HCT116 (cell line): ENCODE measurements at regions of chr18 and their contacts with region 1.

Region 1: DNA sequence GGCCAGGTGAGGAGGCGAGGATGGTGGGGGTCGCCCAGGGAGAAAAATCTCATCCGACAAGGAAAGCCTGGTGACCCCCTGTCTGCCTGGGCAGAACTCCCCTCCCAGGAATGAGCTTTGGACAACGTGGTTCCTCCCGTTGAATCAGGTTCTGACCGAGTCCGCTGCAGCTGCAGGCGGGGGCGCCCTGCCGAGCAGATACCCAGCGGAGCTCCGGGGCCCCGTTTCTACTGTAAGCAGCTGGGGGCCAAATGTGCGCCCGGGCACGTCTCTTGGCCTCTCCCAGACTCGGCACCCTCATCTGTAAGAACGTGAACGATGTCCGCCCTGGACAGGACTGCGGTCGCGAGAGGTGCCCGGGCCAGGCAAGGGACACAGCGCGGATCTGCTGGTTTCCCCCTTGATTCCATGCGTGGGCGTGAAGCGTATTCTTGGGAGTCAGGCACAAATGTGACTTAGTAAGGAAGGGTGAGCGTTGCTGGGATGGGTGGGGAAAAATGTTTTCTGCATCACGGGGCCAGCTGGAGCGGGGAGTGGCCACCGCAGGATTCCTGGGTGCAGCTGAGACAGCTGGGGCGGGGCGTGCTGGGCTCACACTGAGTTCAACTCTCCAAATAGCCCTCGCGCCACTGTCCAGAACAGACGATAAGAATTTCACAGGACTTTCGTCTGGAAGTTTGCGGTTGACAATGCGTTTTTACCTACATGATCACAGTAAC is 20.2 kb upstream of the TUBB6 start:
- DNase-seq: peak; percentile 54
- ATAC-seq: peak; percentile 76
- H3K4me3 ChIP-seq: peak overlapping the region; percentile 45 to 70
- H3K27ac ChIP-seq: peak overlapping the region; percentile 44
- H3K4me1 ChIP-seq: peaks cover 22 to 35% of the 10 kb centered on the region in 2 experiments
- H3K27me3 ChIP-seq: no peaks in the 10 kb centered on the region
- CTCF ChIP-seq: no peak
- POLR2A ChIP-seq: no peak
- RAD21 ChIP-seq: no peak

Region 2: DNA sequence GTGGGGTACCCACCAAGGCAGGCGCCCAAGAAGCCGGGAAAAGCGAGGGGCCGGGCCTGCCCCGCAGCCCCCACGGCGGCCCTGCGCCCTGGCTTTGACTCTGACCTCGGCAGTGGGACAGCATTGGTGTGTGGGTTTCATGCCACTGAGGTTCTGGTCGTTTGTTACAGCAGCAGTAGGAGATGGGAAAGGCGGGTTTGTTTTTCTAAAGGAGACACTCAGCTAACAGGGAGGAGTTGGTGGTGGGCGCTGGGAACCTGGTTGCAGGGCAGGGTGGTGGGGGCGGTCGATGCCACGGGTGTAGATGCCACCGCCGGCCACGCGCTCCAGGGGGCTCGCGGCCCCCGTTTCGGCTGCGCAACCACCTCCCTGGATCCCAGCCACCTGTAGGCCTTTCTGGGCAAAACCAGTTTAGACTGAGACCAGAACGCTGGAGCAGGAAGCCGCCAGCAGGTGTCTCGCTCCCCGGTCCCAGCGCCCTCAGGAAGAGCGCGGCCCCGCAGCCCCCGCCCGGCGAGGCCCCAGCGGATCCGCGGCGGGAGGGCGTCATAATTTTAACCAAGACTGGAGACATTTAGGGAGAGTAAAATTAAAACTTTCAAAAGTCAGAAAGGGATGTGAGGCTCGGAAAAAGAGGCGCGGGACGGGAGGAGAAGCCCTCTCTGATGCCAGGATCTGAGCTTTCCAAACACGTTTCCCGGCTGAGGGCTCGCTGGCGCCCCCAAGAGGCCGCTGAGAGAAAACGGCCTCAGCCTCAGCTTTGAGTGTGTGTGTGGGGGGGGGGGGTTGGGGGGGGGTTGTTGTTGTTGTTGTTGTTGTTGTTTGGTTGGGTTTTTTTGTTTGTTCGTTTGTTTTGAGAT is 16.2 kb before region 1 on chr18:
- CTCF ChIA-PET with region 1: interaction called, 32 read pairs
- POLR2A ChIA-PET with region 1: interaction called, 11 read pairs
- RAD21 ChIA-PET with region 1: no interaction called
- intact Hi-C with region 1: no loop called
- DNase-seq: peak; percentile 49
- ATAC-seq: peak; percentile 94
- H3K4me3 ChIP-seq: peak overlapping the region; percentile 4 to 45; a peak in 3 of 4 replicates
- H3K27ac ChIP-seq: peak overlapping the region; percentile 43; the same call in 1 of the 2 replicates
- H3K4me1 ChIP-seq: peaks cover 0 to 7% of the 10 kb centered on the region in 2 experiments; a peak in 2 of 4 replicates
- H3K27me3 ChIP-seq: no peaks in the 10 kb centered on the region
- CTCF ChIP-seq: peak; percentile 59 to 92 (median 71); a peak in 5 of 6 replicates
- POLR2A ChIP-seq: no peak
- RAD21 ChIP-seq: no peak

Region 3: GRCh38 chr18:12327510-12328178 is 39.8 kb after region 1 on chr18:
- CTCF ChIA-PET with region 1: interaction called, 10 read pairs
- POLR2A ChIA-PET with region 1: no interaction called
- RAD21 ChIA-PET with region 1: no interaction called
- intact Hi-C with region 1: no loop called
- DNase-seq: peak; percentile 52
- ATAC-seq: peak; percentile 97
- H3K4me3 ChIP-seq: no peak overlapping the region
- H3K27ac ChIP-seq: no peak overlapping the region
- H3K4me1 ChIP-seq: peaks cover 0 to 7% of the 10 kb centered on the region in 2 experiments; a peak in 1 of 4 replicates
- H3K27me3 ChIP-seq: no peaks in the 10 kb centered on the region
- CTCF ChIP-seq: peak; percentile 62 to 98 (median 97); a peak in 5 of 6 replicates
- POLR2A ChIP-seq: no peak
- RAD21 ChIP-seq: peak; percentile 47; the same call in 1 of the 2 replicates

Region 4: GRCh38 chr18:12376718-12377555 is 89.1 kb after region 1 on chr18 and contains the start of gene AFG3L2:
- CTCF ChIA-PET with region 1: no interaction called
- POLR2A ChIA-PET with region 1: no interaction called
- RAD21 ChIA-PET with region 1: interaction called in 1 of 2 experiments, 3 read pairs
- intact Hi-C with region 1: loop called (anchors 5 kb)
- DNase-seq: peak; percentile 95
- ATAC-seq: peak; percentile 90
- H3K4me3 ChIP-seq: peak within 1 kb of the TSS; percentile 90 to 95
- H3K27ac ChIP-seq: peak within 1 kb of the TSS; percentile 99
- H3K4me1 ChIP-seq: peaks cover 8 to 17% of the 10 kb centered on the region in 2 experiments
- H3K27me3 ChIP-seq: no peaks in the 10 kb centered on the region
- CTCF ChIP-seq: no peak
- POLR2A ChIP-seq: peak; percentile 84
- RAD21 ChIP-seq: no peak
- total RNA-seq, gene AFG3L2: 66.7 TPM

Region 5: GRCh38 chr18:12391618-12392165 is 103.8 kb after region 1 on chr18:
- CTCF ChIA-PET with region 1: no interaction called
- POLR2A ChIA-PET with region 1: no interaction called
- RAD21 ChIA-PET with region 1: no interaction called
- intact Hi-C with region 1: no loop called
- DNase-seq: peak; percentile 52
- ATAC-seq: peak; percentile 69
- H3K4me3 ChIP-seq: no peak overlapping the region
- H3K27ac ChIP-seq: no peak overlapping the region
- H3K4me1 ChIP-seq: peaks cover 10 to 25% of the 10 kb centered on the region in 2 experiments; a peak in 3 of 4 replicates
- H3K27me3 ChIP-seq: no peaks in the 10 kb centered on the region
- CTCF ChIP-seq: peak; percentile 87 to 95 (median 92)
- POLR2A ChIP-seq: no peak
- RAD21 ChIP-seq: peak; percentile 95